Mammary epithelial cell (primary cell): ENCODE measurements at regions of chr5 and their contacts with region 1.

Region 1: GRCh38 chr5:141960449-141961202 is 2.6 kb upstream of the PCDH12 start:
- DNase-seq: peak; percentile 73
- H3K4me3 ChIP-seq: no peak overlapping the region
- H3K27ac ChIP-seq: no peak overlapping the region
- H3K4me1 ChIP-seq: peaks cover 3% of the 10 kb centered on the region
- H3K27me3 ChIP-seq: no peaks in the 10 kb centered on the region
- CTCF ChIP-seq: peak; percentile 82 to 83

Region 2: DNA sequence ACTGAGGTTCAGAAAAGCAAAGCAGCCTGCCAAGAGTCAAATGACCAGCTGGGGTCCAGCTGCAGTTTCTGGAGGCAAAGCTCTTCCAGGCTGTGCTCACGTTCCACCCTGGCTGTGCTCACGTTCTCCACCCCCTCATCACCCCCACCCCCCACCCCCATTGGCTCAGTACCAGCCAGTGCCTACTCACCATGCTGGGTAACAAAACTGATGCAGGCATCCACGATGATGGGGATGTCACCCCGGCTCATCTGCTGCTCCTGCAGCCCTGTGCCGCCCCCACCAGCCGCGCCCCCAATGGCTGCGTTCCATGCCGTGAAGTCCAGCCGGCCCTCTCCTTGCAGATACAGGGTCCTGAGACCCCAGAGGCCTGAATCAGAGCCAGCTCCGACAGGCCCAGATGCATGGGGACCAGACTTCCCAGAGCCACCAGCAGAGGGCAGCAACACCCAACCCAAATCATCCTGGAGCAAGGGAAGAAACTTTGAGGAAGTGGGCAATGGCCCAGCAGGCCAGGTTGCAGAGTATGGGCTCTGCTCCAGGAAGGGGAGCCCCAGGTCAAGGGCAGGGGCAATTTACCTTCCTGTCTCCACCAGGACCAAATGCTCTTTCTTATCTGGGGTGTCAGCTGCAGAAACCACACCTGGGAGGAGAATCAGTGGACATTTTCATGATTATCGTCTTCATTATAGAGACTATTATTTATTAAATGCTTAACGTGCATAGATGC is 295.7 kb before region 1 on chr5:
- CTCF ChIA-PET with region 1: interaction called, 3 read pairs
- dilution Hi-C with region 1: no loop called
- in situ Hi-C with region 1: no loop called
- intact Hi-C with region 1: loop called (anchors 1 kb)
- DNase-seq: no peak
- H3K4me3 ChIP-seq: no peak overlapping the region
- H3K27ac ChIP-seq: no peak overlapping the region
- H3K4me1 ChIP-seq: no peaks in the 10 kb centered on the region
- H3K27me3 ChIP-seq: no peaks in the 10 kb centered on the region
- CTCF ChIP-seq: peak; percentile 84 to 91

Region 3: DNA sequence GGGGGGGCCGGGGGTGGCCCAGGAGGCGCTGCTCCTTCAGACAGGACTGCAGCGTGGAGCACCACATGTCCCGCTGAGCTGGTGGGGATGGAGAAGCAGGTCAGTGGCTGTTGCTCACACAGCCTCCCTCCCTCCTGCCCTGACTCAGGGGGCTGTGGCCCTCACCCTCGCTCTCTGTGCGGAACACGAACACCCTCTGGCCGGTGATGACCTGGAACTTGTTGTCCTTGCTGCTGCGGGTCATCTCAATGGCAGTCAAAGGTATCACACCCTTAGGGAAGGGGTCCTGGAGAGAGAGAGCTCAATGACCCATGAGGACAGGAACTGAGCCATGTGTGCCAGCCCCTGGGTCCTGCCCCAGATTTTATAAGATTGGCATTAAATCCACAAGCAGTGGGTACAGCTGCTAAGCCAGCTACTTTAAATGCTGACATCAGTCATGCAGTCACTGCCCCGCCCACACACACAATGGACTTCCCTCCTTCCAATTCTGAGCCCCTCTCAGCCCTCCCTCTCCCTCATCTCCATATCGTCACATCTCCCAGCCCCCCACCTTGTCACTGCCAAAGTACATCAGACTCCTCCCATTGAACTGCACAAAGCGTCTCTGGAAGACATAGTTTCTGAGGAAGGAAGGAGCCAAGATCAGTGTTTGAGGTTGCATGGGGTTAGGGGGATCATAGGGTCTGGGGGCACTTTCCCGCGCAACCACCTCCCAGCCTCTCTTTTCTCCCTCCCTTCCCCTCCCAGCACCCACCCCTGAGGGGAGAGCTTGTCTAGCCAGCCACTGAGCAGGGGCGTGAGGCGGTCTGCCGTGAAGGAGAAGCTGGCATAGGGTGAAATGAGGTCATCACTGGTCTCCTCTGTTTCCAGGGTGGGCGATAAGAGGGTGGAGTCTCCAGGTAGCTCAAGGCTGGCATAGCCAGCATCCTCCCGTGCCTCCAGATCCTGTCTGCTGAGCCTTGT is 287.5 kb before region 1 on chr5:
- CTCF ChIA-PET with region 1: interaction called, 20 read pairs
- dilution Hi-C with region 1: no loop called
- in situ Hi-C with region 1: no loop called
- intact Hi-C with region 1: no loop called
- DNase-seq: no peak
- H3K4me3 ChIP-seq: no peak overlapping the region
- H3K27ac ChIP-seq: no peak overlapping the region
- H3K4me1 ChIP-seq: peaks cover 6% of the 10 kb centered on the region
- H3K27me3 ChIP-seq: no peaks in the 10 kb centered on the region
- CTCF ChIP-seq: no peak

Region 4: GRCh38 chr5:141825791-141826560 is 134.7 kb before region 1 on chr5:
- CTCF ChIA-PET with region 1: no interaction called
- dilution Hi-C with region 1: loop called (anchors 10 kb)
- in situ Hi-C with region 1: no loop called
- intact Hi-C with region 1: loop called (anchors 2 kb)
- DNase-seq: no peak
- H3K4me3 ChIP-seq: no peak overlapping the region
- H3K27ac ChIP-seq: no peak overlapping the region
- H3K4me1 ChIP-seq: peaks cover 4% of the 10 kb centered on the region
- H3K27me3 ChIP-seq: no peaks in the 10 kb centered on the region
- CTCF ChIP-seq: peak; percentile 36 to 38

Region 5: DNA sequence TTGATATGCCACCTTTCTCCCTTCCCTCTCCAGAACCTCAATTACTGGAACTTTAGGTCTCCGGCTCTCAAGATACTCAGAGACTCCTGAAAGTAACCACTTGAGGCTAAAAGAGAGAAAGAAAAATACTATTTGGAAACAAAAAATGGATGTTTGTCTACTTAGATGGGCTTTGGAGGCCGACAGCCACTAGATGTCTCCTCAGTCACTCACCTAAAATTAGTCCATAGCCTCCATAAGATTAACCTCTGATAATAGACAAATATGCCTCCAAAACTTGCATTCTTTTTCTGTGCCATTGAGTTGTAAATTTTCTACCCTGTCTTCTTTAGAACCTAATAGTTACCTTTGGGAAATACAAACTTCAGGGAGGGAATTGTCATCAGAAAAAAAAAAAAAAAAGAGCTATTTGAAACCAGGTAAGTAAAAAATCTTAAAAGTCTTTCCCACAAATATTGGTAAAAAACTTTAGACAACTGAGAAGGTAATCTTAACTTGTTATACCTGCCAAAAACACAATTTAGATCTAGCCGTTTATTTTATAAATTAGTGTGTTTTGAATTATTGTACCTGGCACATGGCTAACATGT is 71.2 kb before region 1 on chr5:
- CTCF ChIA-PET with region 1: interaction called, 18 read pairs
- dilution Hi-C with region 1: no loop called
- in situ Hi-C with region 1: loop called (anchors 5 kb)
- intact Hi-C with region 1: loop called (anchors 1 kb)
- DNase-seq: no peak
- H3K4me3 ChIP-seq: no peak overlapping the region
- H3K27ac ChIP-seq: no peak overlapping the region
- H3K4me1 ChIP-seq: no peaks in the 10 kb centered on the region
- H3K27me3 ChIP-seq: no peaks in the 10 kb centered on the region
- CTCF ChIP-seq: peak; percentile 33 to 69

Region 6: GRCh38 chr5:142053426-142054151 is 93.0 kb after region 1 on chr5:
- CTCF ChIA-PET with region 1: no interaction called
- dilution Hi-C with region 1: no loop called
- in situ Hi-C with region 1: no loop called
- intact Hi-C with region 1: no loop called
- DNase-seq: peak; percentile 41
- H3K4me3 ChIP-seq: no peak overlapping the region
- H3K27ac ChIP-seq: no peak overlapping the region
- H3K4me1 ChIP-seq: peaks cover 23% of the 10 kb centered on the region
- H3K27me3 ChIP-seq: no peaks in the 10 kb centered on the region
- CTCF ChIP-seq: no peak